CD8-positive, alpha-beta T cell (primary cell): ENCODE measurements at regions of chr7 and their contacts with region 1.

Region 1: DNA sequence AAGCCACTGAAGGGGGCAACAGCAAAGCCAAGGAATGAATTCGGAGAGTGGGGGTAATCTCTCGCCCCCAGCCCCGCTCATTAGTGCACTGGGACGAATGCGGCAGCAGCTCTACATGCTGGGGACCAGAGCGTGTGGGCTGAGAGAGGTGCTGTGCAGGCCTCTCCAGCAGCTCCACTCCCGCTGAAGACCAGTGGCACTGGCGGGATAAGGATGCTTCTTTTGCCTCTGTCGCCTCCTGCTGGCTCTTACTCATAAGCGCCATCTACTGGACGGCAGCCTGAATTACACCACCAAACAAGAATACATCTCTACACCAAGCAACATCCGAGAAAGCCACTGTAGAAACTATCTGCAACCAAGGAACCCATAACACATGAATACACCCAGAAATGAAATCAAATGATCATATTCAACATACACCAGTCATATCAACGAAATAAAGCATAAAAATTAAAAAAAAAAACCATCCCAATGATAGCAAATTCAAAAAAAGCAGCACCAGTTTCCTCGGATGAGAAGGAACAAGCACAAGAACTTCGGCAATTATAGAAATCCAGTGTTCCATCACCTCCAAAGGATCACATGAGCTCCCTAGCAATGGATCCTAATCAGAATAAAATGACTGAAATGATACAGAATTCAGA is 79.0 kb upstream of the TMEM168 start:
- DNase-seq: peak in 8 of 9 experiments; percentile 10 to 69 (median 47)
- ATAC-seq: peak; percentile 79
- H3K4me3 ChIP-seq: no peak overlapping the region
- H3K4me3 Mint-ChIP-seq: no peak overlapping the region
- H3K27ac ChIP-seq: no peak overlapping the region
- H3K27ac Mint-ChIP-seq: no peak overlapping the region
- H3K4me1 ChIP-seq: no peaks in the 10 kb centered on the region
- H3K4me1 Mint-ChIP-seq: peaks cover 47% of the 10 kb centered on the region
- H3K27me3 ChIP-seq: no peaks in the 10 kb centered on the region
- H3K27me3 Mint-ChIP-seq: no peaks in the 10 kb centered on the region
- CTCF ChIP-seq: peak; percentile 87

Region 2: DNA sequence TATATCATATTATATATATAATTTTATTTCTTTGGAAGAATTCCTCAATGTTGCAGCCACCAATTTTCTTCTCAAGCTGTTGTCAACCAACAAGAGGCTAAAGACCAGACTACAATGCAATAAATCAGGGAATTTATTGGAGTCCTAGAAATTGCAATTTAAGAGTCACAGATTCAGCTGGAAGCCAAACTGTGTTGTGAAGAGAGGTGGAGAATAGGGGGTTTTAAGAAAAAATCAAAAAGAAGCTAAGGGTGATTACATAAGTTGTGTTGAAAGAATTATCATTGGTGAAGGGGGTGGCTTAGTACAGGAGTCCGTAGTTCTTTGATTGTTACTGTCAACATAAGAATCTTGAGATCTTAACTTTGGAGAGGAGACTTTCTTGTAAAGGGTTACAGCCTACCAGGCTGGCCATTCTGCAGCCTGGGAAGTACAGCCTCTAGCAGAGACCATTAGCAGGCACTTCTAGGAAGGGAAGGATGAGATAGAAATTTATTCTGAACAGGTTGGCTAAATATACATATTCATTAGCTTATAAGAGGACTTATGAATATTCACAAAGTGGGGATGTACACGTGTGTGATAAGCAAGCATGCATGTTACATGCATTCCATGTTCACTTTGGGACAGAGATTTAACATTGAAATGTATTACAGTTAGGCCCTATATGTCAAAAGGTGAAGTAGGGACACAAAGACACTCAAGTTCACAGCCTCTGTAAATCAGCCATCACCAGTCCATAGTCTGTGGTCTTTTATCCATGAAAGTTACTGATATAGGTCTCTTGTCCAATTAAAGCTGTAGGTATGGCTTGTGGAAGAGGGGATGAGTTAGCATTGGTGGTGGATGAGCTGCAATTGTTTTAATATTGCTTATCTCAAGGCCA is 70.7 kb before region 1 on chr7:
- CTCF ChIA-PET with region 1: no interaction called
- POLR2A ChIA-PET with region 1: no interaction called
- intact Hi-C with region 1: no loop called
- DNase-seq: peak in 1 of 9 experiments; percentile 15
- ATAC-seq: peak; percentile 31
- H3K4me3 ChIP-seq: no peak overlapping the region
- H3K4me3 Mint-ChIP-seq: no peak overlapping the region
- H3K27ac ChIP-seq: no peak overlapping the region
- H3K27ac Mint-ChIP-seq: peak overlapping the region; percentile 12
- H3K4me1 ChIP-seq: no peaks in the 10 kb centered on the region
- H3K4me1 Mint-ChIP-seq: no peaks in the 10 kb centered on the region
- H3K27me3 ChIP-seq: no peaks in the 10 kb centered on the region
- H3K27me3 Mint-ChIP-seq: no peaks in the 10 kb centered on the region
- CTCF ChIP-seq: no peak

Region 3: GRCh38 chr7:112939574-112940314 is 70.5 kb after region 1 on chr7:
- CTCF ChIA-PET with region 1: no interaction called
- POLR2A ChIA-PET with region 1: no interaction called
- intact Hi-C with region 1: loop called in 1 of 2 experiments (anchors 5 kb)
- DNase-seq: peak; percentile 98 to 100 (median 99)
- ATAC-seq: peak; percentile 94
- H3K4me3 ChIP-seq: peak overlapping the region; percentile 76 to 89
- H3K4me3 Mint-ChIP-seq: peak overlapping the region; percentile 93
- H3K27ac ChIP-seq: peak overlapping the region; percentile 75
- H3K27ac Mint-ChIP-seq: peak overlapping the region; percentile 92
- H3K4me1 ChIP-seq: peaks cover 27% of the 10 kb centered on the region
- H3K4me1 Mint-ChIP-seq: peaks cover 42% of the 10 kb centered on the region
- H3K27me3 ChIP-seq: no peaks in the 10 kb centered on the region
- H3K27me3 Mint-ChIP-seq: no peaks in the 10 kb centered on the region
- CTCF ChIP-seq: no peak